ENCODE measurements at regions of chr1 and their contacts with region 1.

Region 1: GRCh38 chr1:13813398-13814012 is 113.5 kb downstream of the PRDM2 start:
- DNase-seq: peak; percentile 61
- ATAC-seq: peak; percentile 57
- H3K4me3 Mint-ChIP-seq: no peak overlapping the region
- H3K27ac Mint-ChIP-seq: no peak overlapping the region
- H3K4me1 Mint-ChIP-seq: peaks cover 30% of the 10 kb centered on the region
- H3K27me3 Mint-ChIP-seq: no peaks in the 10 kb centered on the region
- CTCF ChIP-seq: peak; percentile 84

Region 2: GRCh38 chr1:13667691-13668090 is 145.8 kb before region 1 on chr1:
- CTCF ChIA-PET with region 1: interaction called, 7 read pairs
- POLR2A ChIA-PET with region 1: no interaction called
- intact Hi-C with region 1: loop called (anchors 5 kb)
- DNase-seq: no peak
- ATAC-seq: no peak
- H3K4me3 Mint-ChIP-seq: no peak overlapping the region
- H3K27ac Mint-ChIP-seq: no peak overlapping the region
- H3K4me1 Mint-ChIP-seq: peaks cover 6% of the 10 kb centered on the region
- H3K27me3 Mint-ChIP-seq: no peaks in the 10 kb centered on the region
- CTCF ChIP-seq: no peak

Measured in activated CD8-positive, alpha-beta T cell treated with anti-CD3 and anti-CD28 coated beads for 36 hours (primary cell).